Heart right ventricle (tissue), 16 donors: ENCODE measurements at regions of chr6 and their contacts with region 1.

Region 1: DNA sequence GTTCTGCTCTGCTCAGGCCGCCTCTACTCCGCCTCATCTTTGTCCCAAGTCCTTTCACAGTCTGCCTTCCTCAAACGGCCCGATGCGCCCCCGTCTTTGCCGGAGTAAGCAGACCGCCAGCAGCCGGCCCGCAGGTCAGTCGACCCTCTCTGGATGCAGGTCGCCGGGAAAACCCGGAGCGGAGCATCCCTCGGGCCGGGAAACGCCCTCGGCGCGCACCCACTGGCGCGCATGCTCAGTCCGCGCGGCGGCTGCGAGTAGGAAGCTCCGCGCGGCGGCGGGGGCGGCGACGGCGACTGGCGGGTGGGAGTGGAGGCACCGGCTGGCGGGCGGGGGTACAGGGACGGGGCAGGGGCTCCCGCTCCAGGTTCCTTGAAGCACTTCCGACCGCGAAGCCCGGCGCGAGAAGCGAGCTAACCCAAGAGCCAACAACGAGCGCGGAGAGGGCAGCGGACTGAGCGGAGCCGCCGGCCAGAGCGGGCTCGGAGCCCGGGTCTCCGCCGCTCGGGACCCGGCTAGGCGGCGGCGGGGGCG is at the start of gene LRRC1:
- DNase-seq: peak; percentile 93 to 95
- ATAC-seq: peak; percentile 84 to 97 (median 95)
- H3K4me3 ChIP-seq: peak within 1 kb of the TSS; percentile 59 to 96 (median 91)
- H3K27ac ChIP-seq: peak within 1 kb of the TSS; percentile 21 to 88 (median 78)
- H3K4me1 ChIP-seq: peaks cover 0 to 33% (median 20%) of the 10 kb centered on the region in 9 donors
- H3K27me3 ChIP-seq: peaks cover 0 to 29% (median 0%) of the 10 kb centered on the region in 7 donors
- CTCF ChIP-seq: no peak
- total RNA-seq, gene LRRC1: 1.2 to 7.0 (median 4.7) TPM

Region 2: DNA sequence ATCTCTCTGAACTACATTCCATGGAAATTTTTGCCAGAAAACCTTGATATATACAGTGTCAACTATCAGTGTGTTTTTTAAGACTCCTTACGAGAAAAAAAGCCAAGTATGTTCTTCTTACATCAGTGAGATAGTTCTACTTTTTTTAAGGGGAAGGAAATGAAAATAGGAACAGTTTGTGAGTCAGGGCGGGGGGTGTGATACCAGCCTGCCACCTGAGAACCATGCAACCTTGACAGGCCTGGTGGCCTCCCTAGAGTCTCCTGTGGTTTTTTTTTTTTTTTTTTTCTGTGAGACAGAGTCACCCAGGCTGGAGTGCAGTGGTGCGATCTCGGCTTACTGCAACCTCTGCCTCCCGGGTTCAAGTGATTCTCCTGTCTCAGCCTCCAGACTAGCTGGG is 549.8 kb before region 1 on chr6:
- intact Hi-C with region 1: no loop called
- DNase-seq: no peak
- ATAC-seq: peak in 3 of 8 donors; percentile 25 to 64 (median 49)
- H3K4me3 ChIP-seq: no peak overlapping the region
- H3K27ac ChIP-seq: peak overlapping the region in 2 of 10 donors; percentile 3 to 84
- H3K4me1 ChIP-seq: peaks cover 0 to 34% (median 0%) of the 10 kb centered on the region in 9 donors
- H3K27me3 ChIP-seq: no peaks in the 10 kb centered on the region
- CTCF ChIP-seq: no peak

Region 3: DNA sequence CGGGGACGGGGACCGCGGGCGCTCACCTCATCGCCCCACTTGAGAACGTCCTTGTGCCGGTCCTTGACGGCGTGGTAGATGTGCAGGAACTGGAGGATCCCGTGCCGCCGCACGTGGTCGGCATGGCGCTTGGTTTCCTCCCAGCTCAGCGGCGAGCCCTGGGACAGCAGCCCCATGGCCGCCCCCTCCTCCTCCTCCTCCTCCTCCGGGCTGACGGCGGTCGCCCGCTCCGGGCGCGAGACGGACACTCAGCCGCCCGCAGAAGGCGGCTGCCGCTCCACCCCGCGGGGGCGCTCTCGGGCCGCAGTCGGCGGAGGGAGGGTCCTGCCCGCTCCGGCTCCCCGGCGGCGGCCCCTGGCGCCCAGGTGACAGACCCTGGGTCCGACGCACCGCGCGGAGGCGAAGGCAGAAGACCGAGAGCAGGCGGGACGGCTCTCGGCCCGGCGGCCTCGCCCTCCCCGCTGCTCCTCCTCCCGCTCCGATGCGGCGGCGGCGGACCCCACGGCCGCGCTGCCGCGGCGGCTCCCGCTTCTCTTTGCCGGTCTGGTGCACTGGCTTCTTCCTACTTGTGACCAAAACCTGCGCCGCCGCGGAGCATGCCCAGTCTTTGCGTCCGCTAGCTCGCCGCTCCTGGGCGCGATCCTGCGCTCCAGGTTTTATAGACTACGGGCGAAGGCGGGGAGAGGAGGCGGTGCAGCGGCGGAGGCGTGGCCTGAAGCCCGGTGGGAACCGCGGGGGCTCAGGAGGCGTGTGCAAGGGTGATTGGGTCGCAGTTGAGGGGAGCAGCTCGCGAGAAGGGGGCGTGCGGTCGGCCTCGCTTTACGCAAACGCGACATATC is 250.1 kb before region 1 on chr6 and contains the start of gene GCLC:
- intact Hi-C with region 1: loop called in 1 of 10 experiments (anchors 10 kb)
- DNase-seq: peak; percentile 95
- ATAC-seq: peak; percentile 80 to 88 (median 83)
- H3K4me3 ChIP-seq: peak within 1 kb of the TSS; percentile 55 to 94 (median 82)
- H3K27ac ChIP-seq: peak within 1 kb of the TSS; percentile 46 to 99 (median 95)
- H3K4me1 ChIP-seq: peaks cover 0 to 56% (median 42%) of the 10 kb centered on the region in 9 donors
- H3K27me3 ChIP-seq: no peaks in the 10 kb centered on the region
- CTCF ChIP-seq: peak; percentile 49 to 88 (median 70)
- total RNA-seq, gene GCLC: 13.9 to 42.8 (median 34.6) TPM

Region 4: DNA sequence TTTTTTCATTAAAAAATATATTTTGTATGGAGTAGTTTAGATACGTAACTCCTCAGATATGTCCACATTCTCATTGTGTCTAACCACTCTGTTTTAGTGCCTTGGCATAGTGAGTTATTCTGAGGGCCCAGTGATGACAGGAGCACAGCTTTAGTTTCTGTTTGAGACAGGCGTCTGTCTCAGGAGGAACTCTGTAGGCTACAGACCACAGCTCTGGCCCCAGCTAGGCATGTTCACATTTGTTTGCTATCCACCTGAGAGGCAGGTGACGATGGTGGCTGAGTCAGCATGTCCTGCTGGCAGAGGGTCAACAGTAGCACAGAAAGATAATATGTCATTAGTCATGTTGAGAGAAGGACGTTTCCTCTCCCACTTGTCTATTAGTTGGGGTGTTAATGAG is 16.3 kb after region 1 on chr6:
- intact Hi-C with region 1: no loop called
- DNase-seq: no peak
- ATAC-seq: peak; percentile 16 to 79 (median 62)
- H3K4me3 ChIP-seq: no peak overlapping the region
- H3K27ac ChIP-seq: peak overlapping the region in 3 of 10 donors; percentile 45 to 51 (median 45)
- H3K4me1 ChIP-seq: peaks cover 0 to 40% (median 7%) of the 10 kb centered on the region in 9 donors
- H3K27me3 ChIP-seq: no peaks in the 10 kb centered on the region
- CTCF ChIP-seq: no peak

Region 5: DNA sequence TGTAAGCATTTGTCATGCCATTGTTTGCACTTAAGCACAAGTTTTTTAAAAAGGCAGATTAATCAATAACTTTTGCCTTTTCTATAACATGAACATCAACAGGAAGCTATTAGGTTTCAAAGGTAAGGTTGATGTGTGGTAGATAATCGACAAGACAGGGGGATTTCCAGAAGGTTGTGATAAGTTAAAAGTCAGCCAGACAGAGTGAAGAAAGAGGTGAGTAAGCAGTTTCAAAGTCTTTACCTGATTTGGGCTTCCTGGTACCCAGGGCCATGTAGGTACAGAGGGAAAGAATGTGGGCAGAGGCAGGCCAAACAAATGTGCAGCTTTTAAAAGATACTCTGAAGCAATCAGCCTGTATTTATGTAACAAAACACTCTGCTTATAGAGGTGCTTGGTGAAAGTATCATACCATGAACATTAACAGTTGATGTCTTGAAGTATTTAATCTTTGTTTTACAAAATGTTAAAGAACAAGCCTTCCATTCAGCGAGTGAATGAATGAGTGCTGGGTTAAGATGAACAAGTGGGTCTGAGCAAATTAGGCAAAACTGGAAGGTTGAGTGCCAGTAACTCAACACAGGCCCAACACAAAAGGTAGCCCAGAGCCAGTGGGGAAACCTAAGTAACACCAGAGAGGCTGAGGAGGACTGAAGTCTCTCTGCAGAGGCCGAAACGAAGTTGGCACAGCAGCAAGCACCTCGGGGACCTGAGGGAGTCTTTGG is 60.2 kb after region 1 on chr6:
- intact Hi-C with region 1: loop called in 1 of 10 experiments (anchors 5 kb)
- DNase-seq: no peak
- ATAC-seq: peak in 2 of 8 donors; percentile 7 to 12
- H3K4me3 ChIP-seq: no peak overlapping the region
- H3K27ac ChIP-seq: no peak overlapping the region
- H3K4me1 ChIP-seq: peaks cover 2 to 52% (median 45%) of the 10 kb centered on the region in 9 donors
- H3K27me3 ChIP-seq: no peaks in the 10 kb centered on the region
- CTCF ChIP-seq: no peak

Region 6: DNA sequence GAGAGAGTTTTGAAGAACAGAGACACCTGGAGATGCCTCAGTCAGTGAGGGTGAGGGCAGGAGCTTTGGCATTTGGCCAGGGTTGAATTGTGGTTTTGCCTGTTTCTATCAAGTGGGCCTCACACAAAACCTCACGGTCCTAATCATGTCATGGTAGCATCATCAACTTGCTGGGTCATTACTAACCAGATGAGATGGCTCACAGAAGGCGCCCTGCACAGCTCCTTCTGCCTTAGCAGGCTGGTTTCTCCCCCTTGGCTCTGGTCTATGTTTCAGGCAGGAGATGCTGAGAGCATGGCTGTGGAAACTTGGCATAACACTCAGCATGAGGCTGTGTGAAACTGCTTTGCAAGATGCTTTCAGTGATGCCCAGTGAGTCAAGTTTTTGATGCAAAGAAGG is 99.3 kb after region 1 on chr6:
- intact Hi-C with region 1: no loop called
- DNase-seq: no peak
- ATAC-seq: peak in 3 of 8 donors; percentile 60 to 70 (median 70)
- H3K4me3 ChIP-seq: no peak overlapping the region
- H3K27ac ChIP-seq: no peak overlapping the region
- H3K4me1 ChIP-seq: peaks cover 0 to 16% (median 0%) of the 10 kb centered on the region in 9 donors
- H3K27me3 ChIP-seq: no peaks in the 10 kb centered on the region
- CTCF ChIP-seq: no peak

Region 7: GRCh38 chr6:53926525-53926924 is 131.7 kb after region 1 on chr6:
- intact Hi-C with region 1: loop called in 1 of 10 experiments (anchors 10 kb)
- DNase-seq: no peak
- ATAC-seq: peak in 2 of 8 donors; percentile 21
- H3K4me3 ChIP-seq: no peak overlapping the region
- H3K27ac ChIP-seq: peak overlapping the region in 6 of 10 donors; percentile 34 to 81 (median 57)
- H3K4me1 ChIP-seq: peaks cover 0 to 50% (median 22%) of the 10 kb centered on the region in 9 donors
- H3K27me3 ChIP-seq: no peaks in the 10 kb centered on the region
- CTCF ChIP-seq: no peak